ENCODE measurements at regions of chr5 and their contacts with region 1.

Region 1: DNA sequence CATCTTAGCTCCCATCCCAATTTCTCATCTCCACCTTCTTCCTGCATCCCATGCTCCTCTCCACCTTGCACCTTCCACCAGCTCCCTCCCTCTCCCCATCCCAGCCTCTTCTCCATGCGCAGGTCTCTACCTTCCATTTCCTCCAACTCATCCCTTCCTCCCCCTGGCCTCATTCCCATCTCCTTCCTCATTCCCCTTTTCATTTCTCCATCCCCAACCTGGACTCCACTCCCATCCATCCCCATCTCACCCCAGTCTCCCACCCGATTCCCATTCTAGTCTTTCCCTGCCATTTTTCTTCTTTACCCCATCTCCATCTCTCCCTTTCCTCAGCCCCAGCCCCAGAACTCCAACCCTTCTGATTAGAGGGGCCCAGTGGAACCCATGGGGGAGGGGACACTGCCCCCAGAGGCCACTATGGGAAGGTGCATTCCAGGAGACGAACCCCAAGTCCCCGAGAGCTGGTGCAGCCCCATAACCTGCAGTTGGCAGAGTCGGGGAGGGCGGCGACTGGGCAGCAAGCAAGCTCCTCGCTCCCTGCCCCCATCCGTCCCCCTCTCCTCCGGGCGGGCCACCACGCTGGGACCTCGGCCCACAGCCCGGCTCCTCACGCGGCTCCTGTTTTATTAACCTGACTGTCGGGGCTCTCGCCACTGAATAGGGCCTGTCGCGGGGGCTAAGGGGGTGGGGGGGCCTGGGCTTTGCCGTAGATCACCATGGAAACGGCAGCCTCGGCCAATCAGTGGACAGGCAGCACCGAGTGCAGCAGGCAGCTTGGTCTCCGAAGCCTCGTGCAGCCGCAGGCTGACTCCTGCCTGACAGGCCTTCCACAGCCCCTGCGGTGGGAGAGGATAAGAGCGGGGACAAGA is 66.7 kb downstream of the PCDH1 start:
- DNase-seq: peak; percentile 52
- ATAC-seq: peak; percentile 83
- H3K4me3 Mint-ChIP-seq: no peak overlapping the region
- H3K27ac Mint-ChIP-seq: no peak overlapping the region
- H3K4me1 Mint-ChIP-seq: no peaks in the 10 kb centered on the region
- H3K27me3 Mint-ChIP-seq: peaks cover 41% of the 10 kb centered on the region

Region 2: GRCh38 chr5:141465351-141465750 is 346.2 kb before region 1 on chr5:
- CTCF ChIA-PET with region 1: no interaction called
- POLR2A ChIA-PET with region 1: no interaction called
- intact Hi-C with region 1: no loop called
- DNase-seq: no peak
- ATAC-seq: no peak
- H3K4me3 Mint-ChIP-seq: no peak overlapping the region
- H3K27ac Mint-ChIP-seq: no peak overlapping the region
- H3K4me1 Mint-ChIP-seq: no peaks in the 10 kb centered on the region
- H3K27me3 Mint-ChIP-seq: peaks cover 16% of the 10 kb centered on the region

Region 3: DNA sequence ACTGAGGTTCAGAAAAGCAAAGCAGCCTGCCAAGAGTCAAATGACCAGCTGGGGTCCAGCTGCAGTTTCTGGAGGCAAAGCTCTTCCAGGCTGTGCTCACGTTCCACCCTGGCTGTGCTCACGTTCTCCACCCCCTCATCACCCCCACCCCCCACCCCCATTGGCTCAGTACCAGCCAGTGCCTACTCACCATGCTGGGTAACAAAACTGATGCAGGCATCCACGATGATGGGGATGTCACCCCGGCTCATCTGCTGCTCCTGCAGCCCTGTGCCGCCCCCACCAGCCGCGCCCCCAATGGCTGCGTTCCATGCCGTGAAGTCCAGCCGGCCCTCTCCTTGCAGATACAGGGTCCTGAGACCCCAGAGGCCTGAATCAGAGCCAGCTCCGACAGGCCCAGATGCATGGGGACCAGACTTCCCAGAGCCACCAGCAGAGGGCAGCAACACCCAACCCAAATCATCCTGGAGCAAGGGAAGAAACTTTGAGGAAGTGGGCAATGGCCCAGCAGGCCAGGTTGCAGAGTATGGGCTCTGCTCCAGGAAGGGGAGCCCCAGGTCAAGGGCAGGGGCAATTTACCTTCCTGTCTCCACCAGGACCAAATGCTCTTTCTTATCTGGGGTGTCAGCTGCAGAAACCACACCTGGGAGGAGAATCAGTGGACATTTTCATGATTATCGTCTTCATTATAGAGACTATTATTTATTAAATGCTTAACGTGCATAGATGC is 146.6 kb before region 1 on chr5:
- CTCF ChIA-PET with region 1: interaction called, 6 read pairs
- POLR2A ChIA-PET with region 1: no interaction called
- intact Hi-C with region 1: loop called in 1 of 2 experiments (anchors 1 kb)
- DNase-seq: peak; percentile 86
- ATAC-seq: peak; percentile 97
- H3K4me3 Mint-ChIP-seq: no peak overlapping the region
- H3K27ac Mint-ChIP-seq: no peak overlapping the region
- H3K4me1 Mint-ChIP-seq: peaks cover 4% of the 10 kb centered on the region
- H3K27me3 Mint-ChIP-seq: no peaks in the 10 kb centered on the region

Region 4: DNA sequence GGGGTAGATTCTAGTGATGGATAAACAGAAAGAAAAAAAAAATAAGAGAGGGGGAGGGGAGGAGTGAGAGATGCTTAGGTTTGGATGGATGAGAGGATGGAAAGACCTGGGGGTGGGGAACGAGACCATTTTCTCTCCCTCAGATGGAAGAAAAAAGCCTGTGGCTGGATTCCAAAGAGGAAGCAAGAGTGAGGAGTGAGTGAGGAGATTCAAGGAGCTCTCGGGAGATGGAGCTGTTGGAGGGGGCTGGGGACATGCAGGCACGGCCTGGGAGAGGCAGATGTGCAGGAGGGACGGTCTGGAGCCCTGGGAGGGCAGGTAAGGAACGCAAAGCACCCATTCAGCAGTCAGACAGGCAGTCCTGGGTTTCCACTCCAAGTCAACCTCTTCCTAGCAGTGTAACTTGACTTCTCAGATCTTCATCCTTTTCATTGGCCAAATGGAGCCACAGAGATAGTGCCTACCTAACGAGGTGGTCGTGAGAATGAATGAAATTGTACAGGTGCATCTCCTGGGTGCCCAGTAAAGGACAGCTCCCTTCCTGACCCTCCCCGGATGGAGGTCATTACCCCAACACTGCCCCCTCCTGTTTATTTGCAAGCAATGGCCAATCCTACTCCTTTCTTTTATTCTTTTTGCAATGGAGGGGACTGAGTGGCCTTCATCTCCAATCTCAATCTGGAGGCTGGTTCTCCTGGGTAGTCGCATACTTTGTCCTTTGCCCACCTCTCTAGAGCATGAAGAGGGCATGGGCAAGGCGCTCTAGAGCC is 14.5 kb after region 1 on chr5:
- CTCF ChIA-PET with region 1: interaction called, 24 read pairs
- POLR2A ChIA-PET with region 1: no interaction called
- intact Hi-C with region 1: no loop called
- DNase-seq: peak; percentile 24
- ATAC-seq: peak; percentile 55
- H3K4me3 Mint-ChIP-seq: no peak overlapping the region
- H3K27ac Mint-ChIP-seq: no peak overlapping the region
- H3K4me1 Mint-ChIP-seq: no peaks in the 10 kb centered on the region
- H3K27me3 Mint-ChIP-seq: peaks cover 4% of the 10 kb centered on the region

Region 5: GRCh38 chr5:141923448-141924352 is 112.2 kb after region 1 on chr5 and contains the start of gene DELE1:
- CTCF ChIA-PET with region 1: no interaction called
- POLR2A ChIA-PET with region 1: no interaction called
- intact Hi-C with region 1: no loop called
- DNase-seq: peak; percentile 96
- ATAC-seq: peak; percentile 94
- H3K4me3 Mint-ChIP-seq: peak within 1 kb of the TSS; percentile 90
- H3K27ac Mint-ChIP-seq: peak within 1 kb of the TSS; percentile 96
- H3K4me1 Mint-ChIP-seq: peaks cover 16% of the 10 kb centered on the region
- H3K27me3 Mint-ChIP-seq: no peaks in the 10 kb centered on the region
- total RNA-seq, gene DELE1: 48.7 to 56.1 TPM

Region 6: GRCh38 chr5:142095651-142096330 is 284.3 kb after region 1 on chr5:
- CTCF ChIA-PET with region 1: no interaction called
- POLR2A ChIA-PET with region 1: no interaction called
- intact Hi-C with region 1: no loop called
- DNase-seq: peak; percentile 93
- ATAC-seq: peak; percentile 91
- H3K4me3 Mint-ChIP-seq: peak overlapping the region; percentile 53
- H3K27ac Mint-ChIP-seq: peak overlapping the region; percentile 97
- H3K4me1 Mint-ChIP-seq: peaks cover 77% of the 10 kb centered on the region
- H3K27me3 Mint-ChIP-seq: no peaks in the 10 kb centered on the region

Measured in activated CD4-positive, alpha-beta T cell treated with anti-CD3 and anti-CD28 coated beads for 36 hours (primary cell).